ENCODE measurements at regions of chr2 and their contacts with region 1.

Region 1: GRCh38 chr2:46831051-46831868 is 84.3 kb downstream of the MCFD2 start:
- DNase-seq: no peak
- H3K4me3 ChIP-seq: no peak overlapping the region
- H3K27ac ChIP-seq: no peak overlapping the region
- H3K4me1 ChIP-seq: peaks cover 4 to 19% (median 11%) of the 10 kb centered on the region in 4 experiments
- H3K27me3 ChIP-seq: no peaks in the 10 kb centered on the region

Region 2: GRCh38 chr2:46841621-46842020 is 10.4 kb after region 1 on chr2:
- CTCF ChIA-PET with region 1: interaction called, 11 read pairs
- POLR2A ChIA-PET with region 1: no interaction called
- DNase-seq: peak in 2 of 3 donors; percentile 61 to 69
- H3K4me3 ChIP-seq: peak overlapping the region in 1 of 7 experiments; percentile 15
- H3K27ac ChIP-seq: no peak overlapping the region
- H3K4me1 ChIP-seq: peaks cover 0 to 23% (median 14%) of the 10 kb centered on the region in 4 experiments
- H3K27me3 ChIP-seq: no peaks in the 10 kb centered on the region

Region 3: DNA sequence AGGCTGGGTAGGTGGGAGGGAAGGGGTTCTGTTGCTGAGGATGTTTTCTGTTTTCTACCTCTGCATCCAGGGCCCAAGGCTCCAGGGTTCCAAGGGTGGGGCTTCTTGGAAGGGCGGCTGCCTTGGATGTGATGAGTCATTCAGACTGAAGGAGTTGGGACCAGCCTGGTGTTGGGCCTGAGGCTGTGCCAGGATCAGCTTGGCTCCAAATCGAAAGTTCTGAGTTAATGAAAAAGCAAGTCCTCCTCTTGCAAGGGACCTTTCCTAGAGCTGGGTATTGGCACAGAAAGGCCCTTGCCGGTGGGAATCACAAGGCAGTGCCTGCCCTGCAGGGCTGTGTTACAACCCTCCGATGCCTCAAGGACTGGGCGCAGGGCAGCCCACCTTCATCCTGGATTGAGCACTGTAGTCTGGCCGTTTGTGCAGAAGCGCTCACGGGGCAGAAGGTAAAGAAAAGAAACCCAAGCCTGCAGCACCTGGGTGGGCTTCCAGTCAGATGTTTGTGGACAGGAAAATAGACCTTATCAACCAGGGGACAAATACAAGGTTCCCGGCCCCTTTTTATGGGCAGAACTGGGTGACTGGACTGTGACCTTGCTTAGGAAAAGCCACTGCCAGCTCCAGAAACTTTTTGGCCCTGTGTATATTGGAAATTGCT is 136.9 kb after region 1 on chr2:
- CTCF ChIA-PET with region 1: no interaction called
- POLR2A ChIA-PET with region 1: no interaction called
- DNase-seq: no peak
- H3K4me3 ChIP-seq: no peak overlapping the region
- H3K27ac ChIP-seq: peak overlapping the region; percentile 44 to 75
- H3K4me1 ChIP-seq: peaks cover 0 to 49% (median 10%) of the 10 kb centered on the region in 4 experiments
- H3K27me3 ChIP-seq: no peaks in the 10 kb centered on the region